ENCODE measurements at regions of chr14 and their contacts with region 1.

Region 1: DNA sequence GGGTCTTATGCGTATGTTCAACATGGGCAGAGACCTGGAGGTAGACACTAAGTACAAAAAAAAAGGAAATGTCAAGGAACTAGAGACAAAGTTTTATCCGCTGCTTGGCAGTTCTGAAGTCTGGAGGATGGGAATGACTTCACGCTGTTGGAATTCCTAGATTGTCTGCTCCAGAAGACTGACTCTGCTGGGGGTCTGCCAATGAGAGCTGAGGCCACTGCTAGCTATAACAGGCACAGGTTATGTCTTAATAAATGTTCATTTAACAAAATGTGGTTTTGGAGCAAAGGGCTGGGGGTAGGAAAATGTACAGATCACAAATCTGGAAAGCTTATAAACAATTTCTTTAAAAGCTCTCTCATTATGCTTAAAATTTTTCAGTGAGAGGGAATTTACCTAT is 5.9 kb downstream of the RNASE8 start:
- DNase-seq: peak; percentile 31
- H3K4me3 Mint-ChIP-seq: no peak overlapping the region
- H3K27ac Mint-ChIP-seq: no peak overlapping the region
- H3K4me1 Mint-ChIP-seq: peaks cover 7% of the 10 kb centered on the region
- H3K27me3 Mint-ChIP-seq: peaks cover 11% of the 10 kb centered on the region
- CTCF ChIP-seq: no peak

Region 2: GRCh38 chr14:21049271-21049673 is 14.2 kb before region 1 on chr14:
- CTCF ChIA-PET with region 1: interaction called, 13 read pairs
- POLR2A ChIA-PET with region 1: interaction called, 5 read pairs
- intact Hi-C with region 1: no loop called
- DNase-seq: no peak
- H3K4me3 Mint-ChIP-seq: no peak overlapping the region
- H3K27ac Mint-ChIP-seq: no peak overlapping the region
- H3K4me1 Mint-ChIP-seq: peaks cover 8% of the 10 kb centered on the region
- H3K27me3 Mint-ChIP-seq: no peaks in the 10 kb centered on the region
- CTCF ChIP-seq: no peak

Region 3: DNA sequence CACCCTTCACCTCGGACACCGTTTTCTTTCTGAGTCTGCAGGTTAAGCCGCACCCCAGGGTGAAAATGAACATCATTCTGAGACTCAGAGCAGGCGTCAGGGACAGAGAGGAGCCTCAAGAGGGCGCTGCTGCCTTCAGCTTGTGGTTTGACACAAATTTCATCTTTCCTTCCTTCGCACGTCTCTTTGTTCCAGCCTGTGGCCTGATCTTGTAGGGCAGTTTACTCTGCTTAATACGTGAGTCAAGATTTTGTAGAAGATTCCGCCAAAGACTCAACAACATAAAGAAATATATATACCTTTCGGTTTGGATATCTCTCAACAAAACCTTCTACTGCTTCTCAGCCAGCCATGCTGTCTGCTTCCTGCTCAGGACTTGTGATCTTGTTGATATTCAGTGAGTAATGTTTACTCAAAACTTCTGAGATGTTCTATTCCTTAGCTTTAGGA is 939.4 kb after region 1 on chr14:
- CTCF ChIA-PET with region 1: no interaction called
- POLR2A ChIA-PET with region 1: no interaction called
- intact Hi-C with region 1: no loop called
- DNase-seq: peak; percentile 34
- H3K4me3 Mint-ChIP-seq: no peak overlapping the region
- H3K27ac Mint-ChIP-seq: no peak overlapping the region
- H3K4me1 Mint-ChIP-seq: no peaks in the 10 kb centered on the region
- H3K27me3 Mint-ChIP-seq: peaks cover 31% of the 10 kb centered on the region
- CTCF ChIP-seq: peak; percentile 16